ENCODE measurements at regions of chr18 and their contacts with region 1.

Region 1: GRCh38 chr18:2121221-2121620 is 450.1 kb downstream of the METTL4 start:
- DNase-seq: no peak
- ATAC-seq: no peak
- H3K4me3 ChIP-seq: no peak overlapping the region
- H3K27ac ChIP-seq: no peak overlapping the region
- H3K4me1 ChIP-seq: no peaks in the 10 kb centered on the region
- H3K27me3 ChIP-seq: no peaks in the 10 kb centered on the region

Region 2: DNA sequence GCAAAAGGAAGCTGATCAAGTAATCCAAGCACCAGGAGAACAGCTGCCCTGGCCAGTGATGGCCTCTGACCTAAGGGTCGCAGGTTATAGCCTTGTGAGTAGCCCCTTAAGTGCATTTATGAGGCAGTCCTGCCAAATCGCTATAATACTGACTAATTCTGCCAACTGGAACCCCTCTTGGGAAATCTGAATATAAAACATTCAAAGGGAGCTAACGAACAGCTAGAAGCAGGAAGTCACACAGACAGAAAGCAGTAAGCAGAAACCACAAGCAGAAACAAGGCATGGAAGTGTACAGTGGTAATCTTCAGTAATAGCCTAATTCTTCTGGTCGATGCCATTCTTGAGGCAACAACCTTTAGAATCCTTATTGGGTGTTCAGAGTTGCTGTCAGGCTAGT is 71.2 kb before region 1 on chr18:
- intact Hi-C with region 1: loop called in 1 of 2 experiments (anchors 10 kb)
- DNase-seq: no peak
- ATAC-seq: no peak
- H3K4me3 ChIP-seq: no peak overlapping the region
- H3K27ac ChIP-seq: no peak overlapping the region
- H3K4me1 ChIP-seq: no peaks in the 10 kb centered on the region
- H3K27me3 ChIP-seq: peaks cover 0 to 2% of the 10 kb centered on the region in 2 donors

Measured in aorta (tissue), 5 donors.